ENCODE measurements at regions of chr22 and their contacts with region 1.

Region 1: GRCh38 chr22:44080936-44081861 is 57.1 kb downstream of the PARVB start:
- DNase-seq: peak; percentile 19
- H3K4me3 ChIP-seq: no peak overlapping the region
- CTCF ChIP-seq: peak; percentile 89

Region 2: GRCh38 chr22:44057401-44057987 is 23.7 kb before region 1 on chr22:
- CTCF ChIA-PET with region 1: interaction called, 25 read pairs
- POLR2A ChIA-PET with region 1: no interaction called
- DNase-seq: no peak
- H3K4me3 ChIP-seq: no peak overlapping the region
- CTCF ChIP-seq: no peak

Region 3: DNA sequence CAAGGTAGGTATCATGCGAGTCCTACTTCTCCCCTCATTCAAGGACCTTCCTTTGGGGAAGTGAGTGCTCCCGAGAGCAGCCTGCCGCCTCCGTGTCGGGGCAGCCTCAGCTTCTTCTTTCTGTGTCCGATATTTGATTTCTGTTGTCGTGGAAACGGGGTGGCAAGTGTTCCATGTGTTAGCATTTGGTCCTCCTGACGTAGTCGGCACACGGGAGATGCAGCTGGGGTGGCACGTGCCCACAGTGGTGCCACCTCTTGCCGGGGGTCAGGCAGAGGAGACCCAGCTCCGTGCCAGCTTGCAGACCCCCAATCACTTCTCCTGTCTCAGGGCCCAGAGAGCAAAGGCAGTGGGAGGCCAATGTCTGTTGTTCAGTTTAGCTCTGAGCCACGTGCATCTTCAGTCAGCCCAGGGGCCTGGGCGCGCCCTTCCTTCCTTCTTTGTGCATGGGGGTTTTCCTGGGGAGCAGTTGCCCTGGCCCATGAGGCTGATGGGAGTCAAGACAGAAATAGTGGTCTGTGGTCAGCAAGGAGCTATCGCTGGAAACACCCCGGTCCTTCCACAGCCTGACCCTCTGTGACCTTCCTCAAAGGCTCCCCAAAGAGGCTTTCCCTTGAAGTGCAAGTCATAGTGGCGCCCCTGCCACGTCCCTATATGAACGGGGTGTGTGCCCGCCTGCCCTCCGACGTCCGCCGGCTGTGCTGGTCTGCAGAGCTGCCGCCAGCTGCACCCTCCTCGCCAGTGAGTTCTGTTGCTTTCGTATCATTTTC is 12.6 kb before region 1 on chr22:
- CTCF ChIA-PET with region 1: interaction called, 64 read pairs
- POLR2A ChIA-PET with region 1: no interaction called
- DNase-seq: no peak
- H3K4me3 ChIP-seq: no peak overlapping the region
- CTCF ChIP-seq: no peak

Region 4: GRCh38 chr22:44098083-44098739 is 17.0 kb after region 1 on chr22:
- CTCF ChIA-PET with region 1: interaction called, 15 read pairs
- POLR2A ChIA-PET with region 1: no interaction called
- DNase-seq: no peak
- H3K4me3 ChIP-seq: no peak overlapping the region
- CTCF ChIP-seq: no peak

Region 5: GRCh38 chr22:44143105-44143474 is 61.9 kb after region 1 on chr22:
- CTCF ChIA-PET with region 1: no interaction called
- POLR2A ChIA-PET with region 1: no interaction called
- DNase-seq: no peak
- H3K4me3 ChIP-seq: no peak overlapping the region
- CTCF ChIP-seq: no peak

Region 6: GRCh38 chr22:44181033-44181911 is 100.1 kb after region 1 on chr22:
- CTCF ChIA-PET with region 1: no interaction called
- POLR2A ChIA-PET with region 1: no interaction called
- DNase-seq: no peak
- H3K4me3 ChIP-seq: no peak overlapping the region
- CTCF ChIP-seq: no peak

Region 7: GRCh38 chr22:44567846-44568493 is 486.8 kb after region 1 on chr22:
- CTCF ChIA-PET with region 1: interaction called, 18 read pairs
- POLR2A ChIA-PET with region 1: no interaction called
- DNase-seq: no peak
- H3K4me3 ChIP-seq: no peak overlapping the region
- CTCF ChIP-seq: peak; percentile 70

Region 8: GRCh38 chr22:44574065-44574464 is 492.9 kb after region 1 on chr22:
- CTCF ChIA-PET with region 1: interaction called, 18 read pairs
- POLR2A ChIA-PET with region 1: no interaction called
- DNase-seq: peak; percentile 16
- H3K4me3 ChIP-seq: no peak overlapping the region
- CTCF ChIP-seq: no peak

Region 9: GRCh38 chr22:44625981-44626687 is 544.9 kb after region 1 on chr22:
- CTCF ChIA-PET with region 1: interaction called, 112 read pairs
- POLR2A ChIA-PET with region 1: no interaction called
- DNase-seq: no peak
- H3K4me3 ChIP-seq: no peak overlapping the region
- CTCF ChIP-seq: peak; percentile 89